ENCODE measurements at regions of chr15 and their contacts with region 1.

Region 1: GRCh38 chr15:91942676-91943576 is 89.4 kb downstream of the SLCO3A1 start:
- DNase-seq: peak; percentile 87 to 97 (median 96)
- H3K4me3 ChIP-seq: peak overlapping the region in 4 of 7 experiments; percentile 32 to 61 (median 42)
- H3K27ac ChIP-seq: peak overlapping the region in 1 of 2 experiments; percentile 60
- H3K4me1 ChIP-seq: peaks cover 13 to 76% (median 50%) of the 10 kb centered on the region in 4 experiments
- H3K27me3 ChIP-seq: no peaks in the 10 kb centered on the region

Region 2: DNA sequence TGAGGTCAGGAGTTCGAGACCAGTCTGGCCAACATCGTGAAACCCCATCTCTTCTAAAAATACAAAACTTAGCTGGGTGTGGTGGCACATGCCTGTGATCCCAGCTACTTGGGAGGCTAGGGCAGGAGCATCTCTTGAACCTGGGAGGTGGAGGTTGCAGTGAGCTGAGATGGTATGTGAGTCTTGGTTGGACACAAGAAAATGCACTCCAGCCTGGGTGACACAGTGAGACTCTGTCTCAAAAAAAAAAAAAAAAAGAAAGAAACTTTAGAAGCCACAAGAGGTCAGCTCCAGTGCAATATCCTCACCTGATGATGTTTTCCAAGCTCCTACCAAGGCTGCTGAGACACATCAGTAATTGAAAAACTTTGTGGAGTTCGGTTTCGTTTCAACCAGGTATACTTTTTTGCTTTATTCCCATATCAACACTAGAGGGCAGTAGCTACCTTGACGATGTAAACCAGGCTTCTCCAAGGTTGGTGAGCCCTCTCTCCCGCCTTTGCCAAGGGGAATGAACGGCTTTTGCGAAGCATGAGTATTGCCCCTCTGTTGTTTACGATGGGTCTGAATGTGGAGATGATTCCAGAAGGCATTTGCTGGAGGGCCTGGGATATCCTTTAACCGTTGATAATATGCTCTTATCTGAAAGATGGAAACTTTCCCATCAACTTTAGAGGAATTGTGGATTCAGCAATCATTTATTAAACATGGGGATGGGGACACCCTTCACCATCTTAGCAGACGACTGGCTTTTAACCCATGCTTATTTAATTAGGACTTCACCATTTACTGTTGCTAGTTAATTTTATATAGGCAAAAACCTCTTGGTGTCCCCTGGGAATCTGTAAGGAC is 640.1 kb before region 1 on chr15:
- CTCF ChIA-PET with region 1: interaction called, 12 read pairs
- POLR2A ChIA-PET with region 1: no interaction called
- DNase-seq: peak; percentile 65 to 76 (median 71)
- H3K4me3 ChIP-seq: no peak overlapping the region
- H3K27ac ChIP-seq: no peak overlapping the region
- H3K4me1 ChIP-seq: peaks cover 0 to 7% (median under 1%) of the 10 kb centered on the region in 4 experiments
- H3K27me3 ChIP-seq: no peaks in the 10 kb centered on the region

Region 3: GRCh38 chr15:91706322-91707032 is 236.4 kb before region 1 on chr15:
- CTCF ChIA-PET with region 1: interaction called, 11 read pairs
- POLR2A ChIA-PET with region 1: no interaction called
- DNase-seq: peak; percentile 90 to 96 (median 95)
- H3K4me3 ChIP-seq: peak overlapping the region in 2 of 7 experiments; percentile 30 to 48
- H3K27ac ChIP-seq: peak overlapping the region in 1 of 2 experiments; percentile 25
- H3K4me1 ChIP-seq: peaks cover 3 to 11% (median 9%) of the 10 kb centered on the region in 4 experiments
- H3K27me3 ChIP-seq: no peaks in the 10 kb centered on the region

Measured in common myeloid progenitor, CD34-positive (primary cell).